ENCODE measurements at regions of chr16 and their contacts with region 1.

Region 1: DNA sequence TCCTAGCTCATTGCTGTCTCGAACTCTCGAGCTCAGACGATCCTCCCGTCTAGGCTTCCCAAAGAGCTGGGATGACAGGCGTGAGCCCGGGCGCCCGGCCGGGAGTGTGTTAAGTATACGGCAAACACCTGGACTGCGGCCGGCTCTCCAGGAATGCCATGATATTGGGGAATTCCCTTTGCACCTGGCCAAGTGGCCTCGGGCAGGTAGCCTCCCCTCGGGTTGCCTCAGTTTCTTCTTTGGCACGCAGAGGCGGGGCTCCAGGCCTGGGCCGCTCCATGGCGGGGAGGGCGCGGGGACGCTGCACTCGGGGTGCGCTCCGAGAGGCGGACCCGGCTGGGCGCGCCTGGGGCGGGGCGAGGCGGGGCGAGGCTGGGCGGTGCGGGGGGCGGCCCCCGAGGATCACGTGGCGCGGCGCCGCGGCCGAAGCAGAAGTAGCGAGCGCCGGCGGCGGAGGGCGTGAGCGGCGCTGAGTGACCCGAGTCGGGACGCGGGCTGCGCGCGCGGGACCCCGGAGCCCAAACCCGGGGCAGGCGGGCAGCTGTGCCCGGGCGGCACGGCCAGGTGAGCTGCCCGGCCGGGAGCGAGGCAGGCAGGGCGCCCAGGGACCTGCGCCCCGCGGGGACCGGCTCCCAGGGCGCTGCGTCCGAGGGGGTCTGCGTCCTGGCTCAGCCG is at the start of gene PLCG2:
- DNase-seq: peak; percentile 91
- ATAC-seq: peak; percentile 85
- H3K4me3 ChIP-seq: peak within 1 kb of the TSS; percentile 81 to 90 (median 83)
- H3K4me3 Mint-ChIP-seq: peak within 1 kb of the TSS; percentile 99
- H3K27ac ChIP-seq: peak within 1 kb of the TSS; percentile 72 to 91
- H3K27ac Mint-ChIP-seq: peak within 1 kb of the TSS; percentile 95
- H3K4me1 ChIP-seq: peaks cover 59 to 67% of the 10 kb centered on the region in 2 donors
- H3K4me1 Mint-ChIP-seq: peaks cover 72% of the 10 kb centered on the region
- H3K27me3 ChIP-seq: no peaks in the 10 kb centered on the region
- H3K27me3 Mint-ChIP-seq: no peaks in the 10 kb centered on the region
- CTCF ChIP-seq: no peak
- total RNA-seq, gene PLCG2: 812 and 852 TPM in 2 replicates

Region 2: DNA sequence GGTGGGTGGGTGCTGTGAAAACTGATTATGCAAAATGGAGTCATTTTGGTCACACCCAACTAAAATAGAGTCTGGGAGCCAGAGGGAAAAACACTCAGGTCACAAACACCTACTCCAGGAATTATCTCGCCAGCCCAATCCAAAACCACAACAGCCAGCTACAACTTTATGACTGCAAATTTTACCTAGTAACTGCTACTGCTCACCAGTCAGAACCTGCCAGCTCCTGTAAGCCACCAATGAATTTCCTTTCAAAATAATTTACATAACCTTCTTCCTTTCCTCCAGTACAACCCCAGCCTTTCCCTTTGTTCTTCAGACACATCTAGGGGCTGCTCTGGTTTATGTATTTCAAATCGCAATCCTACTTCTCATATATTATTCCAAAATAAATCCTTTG is 1290.8 kb before region 1 on chr16:
- CTCF ChIA-PET with region 1: no interaction called
- POLR2A ChIA-PET with region 1: no interaction called
- intact Hi-C with region 1: no loop called
- DNase-seq: no peak
- ATAC-seq: no peak
- H3K4me3 ChIP-seq: no peak overlapping the region
- H3K4me3 Mint-ChIP-seq: no peak overlapping the region
- H3K27ac ChIP-seq: no peak overlapping the region
- H3K27ac Mint-ChIP-seq: no peak overlapping the region
- H3K4me1 ChIP-seq: no peaks in the 10 kb centered on the region
- H3K4me1 Mint-ChIP-seq: no peaks in the 10 kb centered on the region
- H3K27me3 ChIP-seq: peaks cover 0 to 5% (median 0%) of the 10 kb centered on the region in 4 experiments
- H3K27me3 Mint-ChIP-seq: peaks cover 42% of the 10 kb centered on the region
- CTCF ChIP-seq: no peak

Region 3: GRCh38 chr16:81752225-81752875 is 26.6 kb before region 1 on chr16:
- CTCF ChIA-PET with region 1: interaction called, 8 read pairs
- POLR2A ChIA-PET with region 1: interaction called, 8 read pairs
- intact Hi-C with region 1: loop called (anchors 1 kb)
- DNase-seq: peak; percentile 87
- ATAC-seq: peak; percentile 96
- H3K4me3 ChIP-seq: peak overlapping the region in 4 of 5 experiments; percentile 6 to 58 (median 34)
- H3K4me3 Mint-ChIP-seq: peak overlapping the region; percentile 67
- H3K27ac ChIP-seq: peak overlapping the region; percentile 76 to 87
- H3K27ac Mint-ChIP-seq: peak overlapping the region; percentile 87
- H3K4me1 ChIP-seq: peaks cover 67 to 82% of the 10 kb centered on the region in 2 donors
- H3K4me1 Mint-ChIP-seq: peaks cover 67% of the 10 kb centered on the region
- H3K27me3 ChIP-seq: no peaks in the 10 kb centered on the region
- H3K27me3 Mint-ChIP-seq: no peaks in the 10 kb centered on the region
- CTCF ChIP-seq: no peak

Region 4: DNA sequence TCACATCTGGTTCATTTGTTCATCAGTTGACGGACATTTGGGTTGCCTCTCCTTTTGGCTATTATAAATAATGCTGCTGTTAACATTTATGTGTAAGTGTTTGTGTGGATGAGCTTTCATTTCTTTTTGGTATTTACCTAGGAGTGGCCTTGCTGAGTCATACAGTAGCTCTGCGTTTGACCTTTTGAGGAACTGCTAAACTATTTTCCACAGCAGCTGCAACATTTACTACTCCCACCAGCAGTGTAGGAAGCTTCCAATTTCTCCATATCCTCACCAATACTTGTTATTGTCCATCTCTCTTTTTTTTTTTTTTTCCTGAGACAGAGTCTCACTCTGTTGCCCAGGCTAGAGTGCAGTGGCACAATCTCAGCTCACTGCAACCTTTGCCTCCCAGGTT is 20.6 kb before region 1 on chr16:
- CTCF ChIA-PET with region 1: interaction called, 8 read pairs
- POLR2A ChIA-PET with region 1: interaction called, 8 read pairs
- intact Hi-C with region 1: loop called (anchors 1 kb)
- DNase-seq: no peak
- ATAC-seq: peak; percentile 43
- H3K4me3 ChIP-seq: no peak overlapping the region
- H3K4me3 Mint-ChIP-seq: no peak overlapping the region
- H3K27ac ChIP-seq: no peak overlapping the region
- H3K27ac Mint-ChIP-seq: peak overlapping the region; percentile 74
- H3K4me1 ChIP-seq: peaks cover 28 to 40% of the 10 kb centered on the region in 2 donors
- H3K4me1 Mint-ChIP-seq: peaks cover 38% of the 10 kb centered on the region
- H3K27me3 ChIP-seq: no peaks in the 10 kb centered on the region
- H3K27me3 Mint-ChIP-seq: no peaks in the 10 kb centered on the region
- CTCF ChIP-seq: no peak

Region 5: GRCh38 chr16:81798311-81799137 is 19.5 kb after region 1 on chr16:
- CTCF ChIA-PET with region 1: interaction called, 4 read pairs
- POLR2A ChIA-PET with region 1: interaction called, 10 read pairs
- intact Hi-C with region 1: loop called (anchors 1 kb)
- DNase-seq: peak; percentile 87
- ATAC-seq: peak; percentile 80
- H3K4me3 ChIP-seq: peak overlapping the region in 3 of 5 experiments; percentile 4 to 38 (median 6)
- H3K4me3 Mint-ChIP-seq: peak overlapping the region; percentile 77
- H3K27ac ChIP-seq: peak overlapping the region; percentile 90 to 97
- H3K27ac Mint-ChIP-seq: peak overlapping the region; percentile 97
- H3K4me1 ChIP-seq: peaks cover 90 to 98% of the 10 kb centered on the region in 2 donors
- H3K4me1 Mint-ChIP-seq: peaks cover 77% of the 10 kb centered on the region
- H3K27me3 ChIP-seq: no peaks in the 10 kb centered on the region
- H3K27me3 Mint-ChIP-seq: no peaks in the 10 kb centered on the region
- CTCF ChIP-seq: no peak

Region 6: DNA sequence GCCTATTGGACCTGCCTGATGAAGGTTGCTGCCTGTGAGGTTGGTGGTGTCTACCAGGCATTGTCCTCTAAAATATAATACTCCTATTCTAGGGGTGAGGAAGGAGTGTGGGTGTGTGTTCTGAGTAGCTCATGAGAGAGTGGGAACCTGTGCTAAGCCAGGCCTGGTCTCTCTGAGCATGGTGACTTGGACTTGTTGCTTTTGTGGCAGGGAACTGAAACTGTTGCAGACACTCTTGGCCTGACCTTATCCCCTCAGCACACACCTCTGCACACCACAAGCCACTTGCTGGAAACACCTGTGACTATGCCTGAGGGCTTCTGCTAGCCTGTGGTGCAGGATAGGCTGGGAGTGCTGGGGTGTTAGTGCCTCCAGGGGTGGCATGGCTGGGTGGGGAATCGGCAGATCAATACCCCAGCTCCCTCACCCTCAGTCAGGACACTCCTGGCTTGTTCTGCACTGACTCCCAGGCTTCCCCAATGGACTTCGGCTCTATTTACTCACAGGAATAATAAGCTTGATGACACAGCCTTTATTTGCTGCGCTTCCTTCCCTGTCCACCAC is 30.0 kb after region 1 on chr16:
- CTCF ChIA-PET with region 1: interaction called, 6 read pairs
- POLR2A ChIA-PET with region 1: interaction called, 11 read pairs
- intact Hi-C with region 1: no loop called
- DNase-seq: peak; percentile 91
- ATAC-seq: peak; percentile 78
- H3K4me3 ChIP-seq: peak overlapping the region in 4 of 5 experiments; percentile 5 to 43 (median 20)
- H3K4me3 Mint-ChIP-seq: peak overlapping the region; percentile 77
- H3K27ac ChIP-seq: peak overlapping the region; percentile 85 to 94
- H3K27ac Mint-ChIP-seq: peak overlapping the region; percentile 97
- H3K4me1 ChIP-seq: peaks cover 87 to 91% of the 10 kb centered on the region in 2 donors
- H3K4me1 Mint-ChIP-seq: peaks cover 96% of the 10 kb centered on the region
- H3K27me3 ChIP-seq: no peaks in the 10 kb centered on the region
- H3K27me3 Mint-ChIP-seq: no peaks in the 10 kb centered on the region
- CTCF ChIP-seq: no peak

Region 7: GRCh38 chr16:81823111-81823510 is 44.1 kb after region 1 on chr16:
- CTCF ChIA-PET with region 1: interaction called, 8 read pairs
- POLR2A ChIA-PET with region 1: interaction called, 33 read pairs
- intact Hi-C with region 1: loop called (anchors 1 kb)
- DNase-seq: peak; percentile 86
- ATAC-seq: peak; percentile 51
- H3K4me3 ChIP-seq: peak overlapping the region; percentile 23 to 65 (median 54)
- H3K4me3 Mint-ChIP-seq: peak overlapping the region; percentile 75
- H3K27ac ChIP-seq: peak overlapping the region; percentile 94 to 98
- H3K27ac Mint-ChIP-seq: peak overlapping the region; percentile 92
- H3K4me1 ChIP-seq: peaks cover 96 to 100% of the 10 kb centered on the region in 2 donors
- H3K4me1 Mint-ChIP-seq: peaks cover 94% of the 10 kb centered on the region
- H3K27me3 ChIP-seq: no peaks in the 10 kb centered on the region
- H3K27me3 Mint-ChIP-seq: no peaks in the 10 kb centered on the region
- CTCF ChIP-seq: no peak

Region 8: GRCh38 chr16:81863630-81864352 is 84.8 kb after region 1 on chr16:
- CTCF ChIA-PET with region 1: interaction called, 11 read pairs
- POLR2A ChIA-PET with region 1: interaction called, 3 read pairs
- intact Hi-C with region 1: no loop called
- DNase-seq: peak; percentile 74
- ATAC-seq: peak; percentile 75
- H3K4me3 ChIP-seq: peak overlapping the region in 3 of 5 experiments; percentile 1 to 23 (median 10)
- H3K4me3 Mint-ChIP-seq: peak overlapping the region; percentile 46
- H3K27ac ChIP-seq: peak overlapping the region; percentile 57 to 72
- H3K27ac Mint-ChIP-seq: peak overlapping the region; percentile 68
- H3K4me1 ChIP-seq: peaks cover 58 to 60% of the 10 kb centered on the region in 2 donors
- H3K4me1 Mint-ChIP-seq: peaks cover 73% of the 10 kb centered on the region
- H3K27me3 ChIP-seq: no peaks in the 10 kb centered on the region
- H3K27me3 Mint-ChIP-seq: no peaks in the 10 kb centered on the region
- CTCF ChIP-seq: no peak

Region 9: DNA sequence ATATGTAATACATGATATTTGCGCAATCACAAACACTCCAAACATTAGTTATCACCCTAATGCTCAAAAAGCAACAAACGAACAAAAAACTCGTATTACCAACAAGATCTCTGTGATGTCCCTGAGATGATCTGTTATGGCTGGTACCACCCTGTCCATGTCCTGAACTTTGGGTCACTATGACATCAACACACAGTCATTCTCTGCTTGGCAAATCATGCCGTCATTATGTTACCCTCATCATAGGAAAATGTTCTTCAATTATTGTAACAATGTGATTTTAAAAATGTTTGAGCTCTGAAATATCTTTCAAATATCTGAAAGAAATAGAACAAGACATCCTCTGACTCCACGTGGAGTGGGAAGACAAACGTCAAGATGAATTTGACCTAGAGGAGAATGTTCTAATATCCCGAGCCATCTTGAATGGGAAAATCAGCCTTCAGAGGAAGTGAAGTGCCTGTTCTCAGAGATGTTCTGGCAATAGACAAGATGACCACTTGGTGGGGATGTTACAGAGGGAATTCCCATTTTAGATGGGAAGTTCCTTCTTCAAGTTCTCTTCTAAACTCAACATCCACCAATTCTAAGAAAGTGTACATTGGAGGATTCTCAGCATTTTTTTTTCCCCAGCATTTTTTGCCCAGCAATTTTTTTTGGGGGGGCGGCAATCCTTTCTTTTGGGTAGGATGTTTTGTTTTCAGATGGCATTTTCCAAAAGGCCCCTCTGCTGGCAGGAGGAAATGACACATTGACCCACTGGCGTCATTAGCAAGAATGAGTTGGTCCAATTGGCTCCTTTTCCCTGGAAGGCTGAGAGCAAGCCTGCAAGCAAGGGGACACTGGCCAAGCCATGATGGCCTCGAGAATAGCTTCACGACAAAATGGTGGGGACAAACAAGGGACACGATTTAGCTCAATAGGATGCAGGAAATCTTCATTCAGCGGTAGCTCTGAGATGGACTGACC is 252.4 kb after region 1 on chr16:
- CTCF ChIA-PET with region 1: no interaction called
- POLR2A ChIA-PET with region 1: no interaction called
- intact Hi-C with region 1: no loop called
- DNase-seq: no peak
- ATAC-seq: no peak
- H3K4me3 ChIP-seq: no peak overlapping the region
- H3K4me3 Mint-ChIP-seq: no peak overlapping the region
- H3K27ac ChIP-seq: no peak overlapping the region
- H3K27ac Mint-ChIP-seq: no peak overlapping the region
- H3K4me1 ChIP-seq: no peaks in the 10 kb centered on the region
- H3K4me1 Mint-ChIP-seq: no peaks in the 10 kb centered on the region
- H3K27me3 ChIP-seq: peaks cover 0 to 2% (median 0%) of the 10 kb centered on the region in 4 experiments
- H3K27me3 Mint-ChIP-seq: peaks cover 25% of the 10 kb centered on the region
- CTCF ChIP-seq: no peak

Measured in B cell (primary cell).